GM10248 (cell line): ENCODE measurements at regions of chr2 and their contacts with region 1.

Region 1: GRCh38 chr2:96554293-96555145 is 18.0 kb downstream of the ARID5A start:
- DNase-seq: peak; percentile 87
- CTCF ChIP-seq: peak; percentile 87

Region 2: DNA sequence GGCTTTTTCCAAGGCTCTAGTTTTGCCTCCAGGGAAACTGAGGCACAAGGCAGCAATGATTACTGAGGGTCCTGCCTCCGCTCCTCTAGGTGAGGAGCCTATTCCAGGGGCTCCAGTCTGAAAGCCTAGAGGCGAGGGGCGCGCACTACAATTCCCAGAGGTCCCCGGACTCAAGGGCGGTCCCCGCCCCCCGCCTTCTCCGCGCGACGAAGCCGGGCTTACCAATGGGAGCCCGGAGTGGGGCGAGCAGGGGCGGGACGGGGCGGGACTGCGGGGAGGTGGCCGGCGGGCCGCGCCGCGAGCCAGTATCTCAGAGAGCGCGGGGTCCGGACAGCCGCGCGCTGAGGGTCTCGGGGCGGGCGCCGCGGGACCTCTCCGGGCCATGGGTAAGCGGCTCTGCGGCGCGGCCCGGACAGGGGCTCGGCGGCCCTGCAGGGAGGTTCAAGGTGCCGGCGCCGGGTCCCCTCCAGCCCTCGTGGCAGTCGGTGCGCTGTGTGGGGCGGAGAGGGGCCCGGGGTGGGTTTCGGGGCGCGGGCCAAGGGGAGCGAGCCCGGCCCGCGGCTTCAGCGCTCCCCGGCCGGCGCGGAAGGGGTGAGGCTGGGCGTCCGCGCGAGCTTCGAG is 18.0 kb before region 1 on chr2 and contains the start of gene ARID5A:
- CTCF ChIA-PET with region 1: interaction called, 72 read pairs
- POLR2A ChIA-PET with region 1: interaction called, 5 read pairs
- DNase-seq: peak; percentile 93
- CTCF ChIP-seq: no peak

Region 3: GRCh38 chr2:96565111-96565510 is 10.6 kb after region 1 on chr2:
- CTCF ChIA-PET with region 1: interaction called, 80 read pairs
- POLR2A ChIA-PET with region 1: no interaction called
- DNase-seq: no peak
- CTCF ChIP-seq: no peak

Region 4: DNA sequence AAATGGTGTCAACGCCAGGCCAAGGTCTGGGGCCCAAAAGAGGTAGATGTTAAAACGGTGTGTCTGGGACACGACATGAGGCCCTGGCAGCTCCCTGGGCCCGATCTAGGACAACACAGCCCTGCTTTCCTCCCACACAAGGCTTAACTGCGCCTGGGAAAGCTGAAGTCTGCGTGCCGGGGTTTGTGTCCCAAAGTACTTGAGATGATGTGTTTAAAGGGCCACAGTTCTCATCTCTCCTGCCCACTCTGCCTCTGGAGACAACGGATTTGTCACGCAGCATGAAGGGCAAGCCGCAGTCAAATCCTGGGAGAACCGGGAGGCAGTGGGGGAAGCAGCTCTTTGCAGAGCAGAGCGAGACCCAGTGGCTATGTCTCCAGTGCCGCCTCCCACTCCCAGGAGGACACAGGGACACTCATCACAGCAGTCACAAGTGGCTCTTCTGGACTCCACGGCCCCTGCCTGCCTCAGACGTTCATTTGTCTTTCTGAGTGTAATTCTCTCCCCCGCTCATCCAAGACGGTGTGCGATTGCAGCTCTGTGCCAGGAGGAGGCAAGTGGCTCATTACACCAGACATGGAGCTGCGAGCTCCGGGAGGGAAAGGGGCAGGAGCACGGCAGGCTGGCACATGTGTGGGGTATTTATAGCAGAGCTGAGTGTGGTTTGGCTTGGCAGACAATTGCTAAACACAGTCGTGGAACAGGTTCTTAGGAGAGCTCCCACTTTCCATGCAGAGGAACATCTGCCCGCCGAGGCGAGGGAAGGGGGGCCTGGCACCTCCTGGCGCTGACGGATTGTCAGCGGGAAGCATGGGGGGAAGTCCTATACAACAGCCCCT is 373.1 kb after region 1 on chr2:
- CTCF ChIA-PET with region 1: no interaction called
- POLR2A ChIA-PET with region 1: no interaction called
- DNase-seq: no peak
- CTCF ChIP-seq: no peak